ENCODE measurements at regions of chr1 and their contacts with region 1.

Region 1: DNA sequence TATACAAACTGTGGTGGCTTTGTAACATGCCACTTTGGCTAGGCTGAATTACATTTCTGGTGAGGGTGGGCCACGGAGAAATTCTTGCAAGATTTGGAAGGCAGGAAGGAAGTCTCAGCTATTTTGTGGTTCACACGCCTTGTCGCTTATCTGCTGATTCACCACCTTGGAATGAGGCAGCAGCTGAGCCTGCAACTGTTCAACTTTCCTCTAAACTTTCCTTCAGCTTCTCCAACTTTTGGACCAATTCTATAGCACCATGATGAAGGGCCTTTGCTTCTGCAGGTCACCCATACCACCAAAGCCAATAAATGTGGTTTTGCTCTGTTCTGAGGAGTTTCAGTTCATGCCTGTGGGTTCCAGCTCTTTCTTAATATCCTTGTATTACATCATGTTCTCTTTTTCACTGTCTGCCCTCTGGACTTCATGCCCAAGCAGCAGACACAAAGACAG is 337.6 kb upstream of the SNX7 start:
- DNase-seq: peak; percentile 98
- ATAC-seq: peak; percentile 68
- H3K4me3 ChIP-seq: peak overlapping the region; percentile 32
- H3K27ac ChIP-seq: peak overlapping the region; percentile 96
- H3K4me1 ChIP-seq: peaks cover 80% of the 10 kb centered on the region
- H3K27me3 ChIP-seq: no peaks in the 10 kb centered on the region
- CTCF ChIP-seq: no peak

Region 2: DNA sequence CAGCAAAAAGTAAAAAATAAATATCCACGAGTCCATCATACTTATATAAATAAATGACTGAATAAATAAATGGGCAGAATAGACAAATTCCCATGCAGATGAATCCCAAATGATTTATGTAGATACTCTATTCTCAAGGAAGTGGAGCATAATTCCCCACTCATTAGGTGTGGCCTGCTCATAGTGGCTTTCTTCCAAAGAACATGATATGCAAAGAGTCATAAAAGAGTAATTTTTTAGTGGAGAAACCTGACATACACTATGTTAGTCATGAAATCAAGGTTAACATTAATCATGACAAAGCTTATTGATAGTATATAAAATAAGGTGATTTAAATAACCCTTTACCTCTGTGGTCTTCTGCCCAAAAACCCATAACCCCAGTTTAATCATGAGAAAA is 702.0 kb before region 1 on chr1:
- CTCF ChIA-PET with region 1: no interaction called
- POLR2A ChIA-PET with region 1: no interaction called
- intact Hi-C with region 1: no loop called
- DNase-seq: peak; percentile 81
- ATAC-seq: peak; percentile 93
- H3K4me3 ChIP-seq: no peak overlapping the region
- H3K27ac ChIP-seq: peak overlapping the region; percentile 73
- H3K4me1 ChIP-seq: peaks cover 18% of the 10 kb centered on the region
- H3K27me3 ChIP-seq: no peaks in the 10 kb centered on the region
- CTCF ChIP-seq: no peak

Region 3: DNA sequence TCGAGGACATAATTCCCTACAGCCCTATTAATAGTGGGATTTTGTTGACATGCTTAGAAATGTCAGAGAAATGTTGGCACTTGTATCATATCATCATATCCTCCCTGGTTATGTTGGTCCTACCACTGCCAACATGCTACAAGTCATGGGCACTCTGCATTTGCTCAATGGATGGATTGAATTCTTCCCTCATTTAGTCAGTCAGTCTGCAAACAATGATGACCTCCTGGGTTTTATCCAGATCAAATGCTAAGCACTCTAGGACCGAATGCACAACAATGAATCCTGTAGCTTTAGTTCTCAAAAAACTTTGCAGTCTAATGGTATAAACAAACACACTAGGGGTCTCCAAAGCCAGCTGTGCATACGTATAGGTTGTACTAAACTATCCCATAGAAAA is 45.9 kb before region 1 on chr1:
- CTCF ChIA-PET with region 1: no interaction called
- POLR2A ChIA-PET with region 1: no interaction called
- intact Hi-C with region 1: loop called (anchors 1 kb)
- DNase-seq: peak; percentile 89
- ATAC-seq: peak; percentile 79
- H3K4me3 ChIP-seq: no peak overlapping the region
- H3K27ac ChIP-seq: peak overlapping the region; percentile 81
- H3K4me1 ChIP-seq: peaks cover 36% of the 10 kb centered on the region
- H3K27me3 ChIP-seq: no peaks in the 10 kb centered on the region
- CTCF ChIP-seq: no peak

Region 4: DNA sequence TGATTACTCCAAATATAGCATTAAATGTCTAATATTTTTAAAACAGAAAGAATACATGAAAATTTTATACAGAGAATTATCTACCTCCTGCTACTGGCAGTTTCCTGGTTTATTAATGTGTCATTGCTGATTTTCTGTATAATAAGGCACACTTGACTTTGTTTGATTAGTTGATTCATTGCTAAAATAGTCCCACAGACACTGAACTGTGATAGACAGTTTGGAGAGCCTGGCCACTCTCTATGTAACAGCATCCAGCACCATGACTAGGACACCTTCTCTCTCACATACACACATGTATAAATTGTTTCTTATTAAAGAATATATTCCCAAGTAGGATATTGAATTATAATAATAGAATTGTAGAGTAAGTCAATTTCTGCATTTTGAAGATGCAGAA is 30.9 kb before region 1 on chr1:
- CTCF ChIA-PET with region 1: no interaction called
- POLR2A ChIA-PET with region 1: interaction called, 3 read pairs
- intact Hi-C with region 1: loop called (anchors 2 kb)
- DNase-seq: peak; percentile 78
- ATAC-seq: peak; percentile 95
- H3K4me3 ChIP-seq: no peak overlapping the region
- H3K27ac ChIP-seq: peak overlapping the region; percentile 48
- H3K4me1 ChIP-seq: peaks cover 32% of the 10 kb centered on the region
- H3K27me3 ChIP-seq: no peaks in the 10 kb centered on the region
- CTCF ChIP-seq: no peak

Region 5: GRCh38 chr1:98340511-98340910 is 16.6 kb after region 1 on chr1:
- CTCF ChIA-PET with region 1: no interaction called
- POLR2A ChIA-PET with region 1: no interaction called
- intact Hi-C with region 1: no loop called
- DNase-seq: no peak
- ATAC-seq: no peak
- H3K4me3 ChIP-seq: no peak overlapping the region
- H3K27ac ChIP-seq: no peak overlapping the region
- H3K4me1 ChIP-seq: no peaks in the 10 kb centered on the region
- H3K27me3 ChIP-seq: no peaks in the 10 kb centered on the region
- CTCF ChIP-seq: no peak